ENCODE measurements at regions of chr4 and their contacts with region 1.

Region 1: GRCh38 chr4:78704981-78705683 is 71.0 kb upstream of the BMP2K start:
- DNase-seq: no peak
- H3K4me3 ChIP-seq: no peak overlapping the region
- H3K27ac ChIP-seq: peak overlapping the region in 47 of 59 donors; percentile 1 to 90 (median 54)
- H3K27me3 ChIP-seq: no peaks in the 10 kb centered on the region
- CTCF ChIP-seq: no peak

Region 2: DNA sequence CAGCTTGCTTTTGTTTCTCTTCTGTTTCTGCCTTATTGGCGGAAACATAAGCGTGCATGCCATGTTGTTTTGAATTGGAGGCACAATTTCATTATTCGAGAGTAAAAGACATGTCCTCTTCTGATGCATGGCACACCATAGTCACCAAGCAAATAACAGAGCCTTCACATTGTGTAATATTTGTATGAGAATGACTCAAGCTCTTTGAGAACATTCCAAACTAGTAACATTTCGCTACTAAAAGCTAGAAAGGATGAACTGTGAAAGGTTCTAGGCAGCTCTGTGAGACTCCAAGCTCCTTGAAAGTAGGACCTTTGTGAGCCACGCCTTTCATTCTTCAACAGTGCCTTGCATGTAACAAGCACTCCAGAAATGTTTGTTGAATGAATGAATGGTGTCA is 162.8 kb before region 1 on chr4:
- intact Hi-C with region 1: no loop called
- DNase-seq: no peak
- H3K4me3 ChIP-seq: no peak overlapping the region
- H3K27ac ChIP-seq: no peak overlapping the region
- H3K27me3 ChIP-seq: peaks cover 0 to 4% (median 0%) of the 10 kb centered on the region in 45 donors
- CTCF ChIP-seq: no peak

Region 3: DNA sequence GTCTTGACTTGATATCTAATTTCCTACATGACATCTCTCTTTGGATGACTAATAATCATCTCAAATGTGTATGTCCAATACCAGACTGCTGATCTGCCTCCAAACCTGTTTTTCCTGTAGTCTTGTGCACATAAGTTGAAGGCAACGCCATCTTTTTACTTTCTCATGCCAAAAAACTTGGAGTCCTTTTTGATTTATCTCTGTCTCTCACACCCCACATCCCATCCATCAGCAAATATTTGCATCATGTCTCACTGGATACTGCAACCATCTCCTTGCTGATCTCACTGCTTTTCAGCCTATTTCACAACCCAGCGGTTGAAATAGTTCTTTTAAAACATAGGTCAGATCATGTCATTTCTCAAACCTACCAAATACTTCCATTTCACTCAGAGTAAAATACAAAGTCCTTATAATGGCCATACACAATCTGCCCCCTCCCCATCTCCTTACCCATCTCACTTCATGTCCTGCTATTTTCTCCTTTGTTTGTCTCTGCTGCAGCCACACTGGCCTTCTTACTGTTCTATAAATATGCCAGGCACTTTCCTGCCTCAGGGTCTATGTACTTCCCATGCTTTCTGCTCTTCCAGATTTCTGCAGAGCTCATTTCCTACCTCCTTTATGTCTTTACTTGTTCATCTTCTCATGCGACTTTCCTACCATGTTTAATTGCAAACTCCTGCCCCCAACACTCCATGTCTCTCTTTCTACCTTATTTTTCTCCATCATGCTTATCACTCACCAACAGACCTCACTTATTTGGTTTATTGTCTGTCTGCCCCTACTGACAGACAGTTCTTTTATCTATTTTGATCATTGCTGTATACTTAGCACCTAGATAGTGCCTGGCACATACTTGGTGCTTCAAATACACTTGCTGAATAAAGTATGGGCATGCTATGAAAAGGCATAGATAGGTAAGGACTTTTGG is 54.8 kb before region 1 on chr4:
- intact Hi-C with region 1: loop called in 1 of 2 experiments (anchors 5 kb)
- DNase-seq: no peak
- H3K4me3 ChIP-seq: no peak overlapping the region
- H3K27ac ChIP-seq: peak overlapping the region in 27 of 59 donors; percentile 12 to 88 (median 41)
- H3K27me3 ChIP-seq: peaks cover 0 to 2% (median 0%) of the 10 kb centered on the region in 45 donors
- CTCF ChIP-seq: no peak

Measured in dorsolateral prefrontal cortex (tissue), 120 donors.